SK-N-SH (cell line): ENCODE measurements at regions of chr6 and their contacts with region 1.

Region 1: GRCh38 chr6:159062564-159062945 is 17.8 kb upstream of the TAGAP start:
- DNase-seq: no peak
- H3K4me3 ChIP-seq: no peak overlapping the region
- H3K27ac ChIP-seq: no peak overlapping the region
- H3K4me1 ChIP-seq: no peaks in the 10 kb centered on the region
- H3K27me3 ChIP-seq: peaks cover 19% of the 10 kb centered on the region; the same call in 1 of the 2 replicates
- CTCF ChIP-seq: no peak
- EP300 ChIP-seq: no peak
- RAD21 ChIP-seq: no peak

Region 2: GRCh38 chr6:159042003-159042825 is 20.3 kb before region 1 on chr6:
- CTCF ChIA-PET with region 1: interaction called, 16 read pairs
- POLR2A ChIA-PET with region 1: no interaction called
- DNase-seq: peak; percentile 68
- H3K4me3 ChIP-seq: no peak overlapping the region
- H3K27ac ChIP-seq: no peak overlapping the region
- H3K4me1 ChIP-seq: peaks cover 0 to 2% of the 10 kb centered on the region in 2 experiments; a peak in 1 of 4 replicates
- H3K27me3 ChIP-seq: peaks cover 37% of the 10 kb centered on the region
- CTCF ChIP-seq: peak; percentile 97
- EP300 ChIP-seq: no peak
- RAD21 ChIP-seq: peak; percentile 74